Mammary epithelial cell (primary cell): ENCODE measurements at regions of chr12 and their contacts with region 1.

Region 1: DNA sequence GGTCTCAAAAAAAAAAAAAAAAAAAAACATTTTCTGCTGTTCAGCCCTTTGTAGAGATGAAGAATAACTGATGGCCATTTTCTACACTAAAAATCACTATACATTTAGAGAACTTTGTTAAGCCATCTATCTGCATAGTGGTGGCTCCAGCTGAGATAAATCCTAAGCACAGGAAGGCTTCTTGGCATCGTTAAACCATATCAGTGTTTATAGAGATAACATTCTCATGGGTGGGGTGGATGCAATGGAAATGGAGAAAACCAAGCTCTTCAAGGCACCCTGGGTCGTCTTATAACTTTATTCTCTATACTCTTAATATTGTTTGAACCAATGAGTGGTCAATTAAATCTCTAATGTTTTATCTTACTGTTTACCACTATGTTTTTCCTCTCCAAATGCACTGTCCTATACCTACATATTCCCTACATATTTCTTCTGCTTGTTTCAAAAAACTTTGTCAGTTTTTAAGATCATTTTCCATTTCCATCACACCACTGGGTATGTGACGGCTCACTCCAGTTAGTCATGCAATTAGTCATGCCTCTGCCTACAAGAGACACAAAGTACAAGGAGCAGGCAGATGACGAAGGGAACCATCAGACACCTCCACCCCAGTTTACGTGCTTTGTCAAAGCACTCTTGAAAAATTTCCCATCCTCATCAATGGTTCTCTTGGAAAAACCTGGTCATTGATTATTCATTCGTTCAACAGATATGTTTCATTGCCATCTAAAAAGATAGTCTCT is 119.4 kb upstream of the OVCH1 start:
- DNase-seq: peak; percentile 92
- H3K4me3 ChIP-seq: no peak overlapping the region
- H3K27ac ChIP-seq: peak overlapping the region; percentile 96
- H3K4me1 ChIP-seq: peaks cover 16% of the 10 kb centered on the region
- H3K27me3 ChIP-seq: no peaks in the 10 kb centered on the region
- CTCF ChIP-seq: no peak

Region 2: DNA sequence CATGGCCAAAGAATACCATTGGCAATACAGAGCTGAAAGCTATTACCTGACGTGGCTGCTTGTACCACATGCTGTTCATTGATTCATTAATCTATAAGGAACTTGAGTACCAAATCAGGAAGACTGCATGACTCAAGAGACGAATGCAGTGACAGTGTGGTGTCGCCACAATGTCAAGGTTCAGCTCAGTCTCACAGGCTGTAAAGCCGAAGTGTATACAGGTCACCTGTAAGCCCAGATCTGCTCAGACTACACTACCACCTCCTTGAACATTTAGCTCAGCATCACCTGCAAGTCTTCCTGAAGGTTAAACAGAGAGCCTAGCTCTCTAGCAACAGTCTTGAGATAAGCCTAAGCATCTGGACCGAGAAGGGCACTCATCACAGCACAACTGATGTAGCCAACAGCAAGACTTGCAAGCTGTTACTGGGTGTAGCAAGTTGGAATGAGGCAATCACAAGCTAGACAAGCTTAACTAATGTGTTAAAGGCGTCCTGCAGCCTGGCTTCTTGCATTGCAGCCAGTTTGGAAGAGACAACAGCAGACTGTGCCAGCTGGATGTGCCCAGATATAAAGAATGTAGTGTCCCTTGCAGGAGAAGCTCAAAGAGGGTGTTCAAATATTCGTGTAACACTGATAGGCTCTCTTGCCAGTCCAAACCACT is 145.9 kb after region 1 on chr12:
- CTCF ChIA-PET with region 1: no interaction called
- dilution Hi-C with region 1: no loop called
- in situ Hi-C with region 1: no loop called
- intact Hi-C with region 1: no loop called
- DNase-seq: no peak
- H3K4me3 ChIP-seq: no peak overlapping the region
- H3K27ac ChIP-seq: no peak overlapping the region
- H3K4me1 ChIP-seq: no peaks in the 10 kb centered on the region
- H3K27me3 ChIP-seq: no peaks in the 10 kb centered on the region
- CTCF ChIP-seq: no peak

Region 3: DNA sequence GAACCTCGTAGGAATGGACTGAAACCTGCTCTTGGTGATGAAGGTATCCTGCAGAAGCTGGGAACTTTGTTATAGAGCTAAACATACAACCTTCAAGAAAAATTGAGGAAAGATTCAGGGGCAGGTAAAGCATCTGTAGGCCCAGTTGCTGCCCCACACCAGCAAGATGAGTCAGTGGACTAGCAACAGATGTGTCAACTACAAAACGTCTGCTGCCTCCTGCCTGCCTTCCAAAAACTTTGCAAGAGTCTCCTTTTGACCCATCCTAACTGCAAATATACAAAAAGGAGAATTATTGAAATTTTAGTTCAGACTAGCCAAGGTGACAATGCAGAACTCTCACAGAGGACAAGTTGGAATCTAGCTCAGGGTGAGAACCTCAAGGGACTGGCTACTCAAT is 227.8 kb after region 1 on chr12:
- CTCF ChIA-PET with region 1: no interaction called
- dilution Hi-C with region 1: no loop called
- in situ Hi-C with region 1: no loop called
- intact Hi-C with region 1: loop called (anchors 10 kb)
- DNase-seq: peak; percentile 54
- H3K4me3 ChIP-seq: no peak overlapping the region
- H3K27ac ChIP-seq: no peak overlapping the region
- H3K4me1 ChIP-seq: no peaks in the 10 kb centered on the region
- H3K27me3 ChIP-seq: peaks cover 1% of the 10 kb centered on the region
- CTCF ChIP-seq: peak in 1 of 2 donors; percentile 43